ENCODE measurements at regions of chr17 and their contacts with region 1.

Region 1: DNA sequence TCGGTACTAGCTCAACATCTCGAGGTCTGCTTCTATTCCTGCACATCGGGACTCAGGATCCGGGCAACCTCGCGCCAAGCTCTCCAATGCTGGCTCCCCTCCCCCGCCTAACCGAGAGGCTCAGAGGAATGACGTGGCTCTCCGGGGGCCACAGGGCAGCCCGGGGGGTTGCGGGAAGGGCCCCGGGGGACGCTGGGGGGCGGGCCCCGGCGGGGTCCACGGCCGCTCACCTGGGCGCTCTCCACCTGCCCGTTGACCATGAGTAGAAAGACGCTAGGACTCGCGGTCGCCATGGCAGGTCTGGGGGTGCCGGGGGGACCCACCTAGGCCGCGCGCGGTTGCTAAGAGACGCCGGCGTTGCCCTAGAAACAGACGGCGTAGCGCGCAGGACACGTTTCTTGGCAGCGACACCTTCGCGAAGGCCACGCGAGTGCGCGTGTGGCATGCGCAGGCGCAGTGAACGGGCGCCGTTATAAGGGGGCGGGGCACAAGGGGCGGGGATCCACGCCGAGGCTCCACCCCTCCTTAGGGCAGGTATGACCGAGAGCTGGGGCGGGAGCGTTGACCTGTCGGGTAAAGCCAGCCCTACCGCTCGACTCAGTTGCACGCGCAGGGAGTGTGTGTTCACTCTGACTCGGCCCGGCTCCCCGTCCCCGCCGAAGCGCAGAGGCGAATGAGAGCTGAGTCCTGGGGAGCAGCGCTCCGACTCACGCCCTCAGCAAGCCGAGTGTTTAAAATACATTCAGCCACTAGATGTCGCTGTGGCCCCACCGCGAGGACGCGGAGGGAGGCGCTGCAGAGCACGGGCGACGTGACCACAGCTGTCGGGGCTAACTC is at the start of gene B9D1:
- DNase-seq: peak; percentile 97

Region 2: DNA sequence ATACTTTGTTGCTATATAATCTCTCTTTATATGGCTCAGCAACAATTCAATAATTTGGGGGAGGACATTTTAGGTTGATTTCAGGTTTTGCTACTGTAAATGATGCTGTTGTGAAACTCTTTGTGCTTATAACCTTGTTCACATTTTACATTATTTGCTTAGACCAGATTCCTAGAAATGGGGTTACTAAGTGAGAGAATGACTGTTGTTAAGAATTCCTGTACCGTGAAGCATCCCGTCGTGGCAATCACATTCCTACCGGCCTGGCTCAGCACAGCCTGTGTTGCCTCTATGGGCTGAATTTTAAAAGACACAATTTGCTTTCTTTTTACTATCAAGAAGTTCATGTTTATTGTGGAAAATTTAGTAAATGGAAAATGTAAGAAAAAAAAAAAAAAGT is 31.4 kb before region 1 on chr17:
- CTCF ChIA-PET with region 1: no interaction called
- POLR2A ChIA-PET with region 1: no interaction called
- DNase-seq: no peak

Region 3: DNA sequence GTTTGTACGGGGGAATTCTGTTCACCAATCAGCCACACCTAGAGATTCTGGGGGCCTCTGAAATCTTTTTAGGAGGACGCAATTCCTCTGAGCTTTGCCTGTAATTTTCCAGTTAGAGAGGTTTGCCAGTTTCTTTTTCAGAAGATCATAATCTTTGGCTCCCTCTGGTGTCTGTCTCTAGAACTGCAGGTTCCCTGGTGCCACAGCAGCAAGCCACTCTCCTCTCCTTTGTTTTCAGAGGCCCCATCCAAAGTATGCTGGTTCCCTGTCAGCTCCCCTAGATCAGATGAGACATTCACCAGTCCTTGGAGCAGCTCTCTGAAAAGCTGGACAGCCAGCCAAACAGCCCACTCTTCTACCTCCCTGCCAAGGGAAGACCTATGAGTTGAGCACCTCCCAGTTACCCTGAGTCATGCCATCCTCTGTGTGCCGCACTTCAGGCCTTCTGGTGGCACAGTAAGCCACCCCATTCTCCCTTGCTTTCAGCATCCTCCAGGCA is 84.6 kb after region 1 on chr17:
- CTCF ChIA-PET with region 1: interaction called, 59 read pairs
- POLR2A ChIA-PET with region 1: interaction called, 9 read pairs
- DNase-seq: peak; percentile 75

Measured in HEK293T (cell line).